ENCODE measurements at regions of chr14 and their contacts with region 1.

Region 1: GRCh38 chr14:66662374-66662773 is 154.4 kb downstream of the GPHN start:
- DNase-seq: no peak
- ATAC-seq: no peak
- H3K4me3 ChIP-seq: no peak overlapping the region
- H3K4me3 Mint-ChIP-seq: no peak overlapping the region
- H3K27ac ChIP-seq: no peak overlapping the region
- H3K27ac Mint-ChIP-seq: no peak overlapping the region
- H3K4me1 ChIP-seq: no peaks in the 10 kb centered on the region
- H3K4me1 Mint-ChIP-seq: peaks cover 0 to 5% (median 0%) of the 10 kb centered on the region in 7 donors
- H3K27me3 ChIP-seq: no peaks in the 10 kb centered on the region
- H3K27me3 Mint-ChIP-seq: no peaks in the 10 kb centered on the region

Region 2: DNA sequence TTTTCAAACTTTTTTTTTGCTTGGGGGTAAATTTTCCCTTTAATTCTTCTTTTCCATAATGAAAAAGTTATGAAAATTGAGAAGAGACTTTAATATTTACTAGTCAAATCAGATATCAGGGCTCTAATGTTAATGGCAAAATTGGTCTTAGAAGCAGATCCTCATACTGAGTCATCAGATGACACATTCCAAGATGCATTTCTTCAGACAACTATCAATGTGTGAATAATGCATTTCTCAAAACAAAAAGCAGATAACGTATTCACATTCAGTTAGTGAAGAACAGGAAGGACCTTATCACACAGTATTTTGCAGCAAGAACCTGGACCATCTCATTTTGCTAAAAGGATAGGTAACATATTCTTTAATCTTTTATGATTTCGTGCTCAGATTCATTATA is 23.7 kb before region 1 on chr14:
- CTCF ChIA-PET with region 1: no interaction called
- POLR2A ChIA-PET with region 1: no interaction called
- intact Hi-C with region 1: no loop called
- DNase-seq: no peak
- ATAC-seq: no peak
- H3K4me3 ChIP-seq: no peak overlapping the region
- H3K4me3 Mint-ChIP-seq: no peak overlapping the region
- H3K27ac ChIP-seq: no peak overlapping the region
- H3K27ac Mint-ChIP-seq: no peak overlapping the region
- H3K4me1 ChIP-seq: no peaks in the 10 kb centered on the region
- H3K4me1 Mint-ChIP-seq: peaks cover 0 to 24% (median 10%) of the 10 kb centered on the region in 7 donors
- H3K27me3 ChIP-seq: no peaks in the 10 kb centered on the region
- H3K27me3 Mint-ChIP-seq: no peaks in the 10 kb centered on the region

Region 3: DNA sequence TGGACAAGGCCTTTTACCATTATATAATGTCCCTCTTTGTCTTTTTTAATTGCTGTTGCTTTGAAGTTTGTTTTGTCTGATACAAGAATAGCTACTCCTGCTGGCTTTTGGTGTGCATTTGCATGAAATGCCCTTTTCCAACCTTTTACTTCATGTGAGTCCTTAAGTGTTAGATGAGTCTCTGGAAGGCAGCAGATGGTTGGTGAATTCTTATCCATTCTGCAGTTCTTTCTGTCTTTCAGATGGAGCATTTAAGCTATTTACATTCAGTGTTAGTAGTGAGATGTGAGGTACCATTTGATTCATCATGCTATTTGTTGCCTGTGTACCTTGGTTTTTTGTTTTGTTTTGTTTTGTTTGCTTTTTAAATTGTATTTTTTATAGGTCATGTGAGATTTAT is 53.9 kb after region 1 on chr14:
- CTCF ChIA-PET with region 1: no interaction called
- POLR2A ChIA-PET with region 1: no interaction called
- intact Hi-C with region 1: loop called in 1 of 2 experiments (anchors 10 kb)
- DNase-seq: no peak
- ATAC-seq: no peak
- H3K4me3 ChIP-seq: no peak overlapping the region
- H3K4me3 Mint-ChIP-seq: peak overlapping the region in 1 of 10 donors; percentile 61
- H3K27ac ChIP-seq: no peak overlapping the region
- H3K27ac Mint-ChIP-seq: peak overlapping the region in 1 of 9 donors; percentile 24
- H3K4me1 ChIP-seq: peaks cover 0 to 4% of the 10 kb centered on the region in 2 donors
- H3K4me1 Mint-ChIP-seq: peaks cover 18 to 47% (median 40%) of the 10 kb centered on the region in 7 donors
- H3K27me3 ChIP-seq: no peaks in the 10 kb centered on the region
- H3K27me3 Mint-ChIP-seq: peaks cover 0 to 5% (median 0%) of the 10 kb centered on the region in 5 donors